ENCODE measurements at regions of chr6 and their contacts with region 1.

Region 1: GRCh38 chr6:116969211-116969863 is 92.3 kb downstream of the RFX6 start:
- DNase-seq: peak; percentile 74
- H3K4me3 Mint-ChIP-seq: no peak overlapping the region
- H3K27ac Mint-ChIP-seq: no peak overlapping the region
- H3K4me1 Mint-ChIP-seq: no peaks in the 10 kb centered on the region
- H3K27me3 Mint-ChIP-seq: peaks cover 63% of the 10 kb centered on the region
- CTCF ChIP-seq: peak; percentile 59

Region 2: GRCh38 chr6:116881236-116881635 is 88.1 kb before region 1 on chr6:
- CTCF ChIA-PET with region 1: interaction called, 5 read pairs
- POLR2A ChIA-PET with region 1: no interaction called
- intact Hi-C with region 1: loop called (anchors 1 kb)
- DNase-seq: peak; percentile 28
- H3K4me3 Mint-ChIP-seq: no peak overlapping the region
- H3K27ac Mint-ChIP-seq: no peak overlapping the region
- H3K4me1 Mint-ChIP-seq: no peaks in the 10 kb centered on the region
- H3K27me3 Mint-ChIP-seq: peaks cover 55% of the 10 kb centered on the region
- CTCF ChIP-seq: no peak

Region 3: GRCh38 chr6:117078624-117079023 is 109.3 kb after region 1 on chr6:
- CTCF ChIA-PET with region 1: no interaction called
- POLR2A ChIA-PET with region 1: no interaction called
- intact Hi-C with region 1: no loop called
- DNase-seq: no peak
- H3K4me3 Mint-ChIP-seq: no peak overlapping the region
- H3K27ac Mint-ChIP-seq: no peak overlapping the region
- H3K4me1 Mint-ChIP-seq: no peaks in the 10 kb centered on the region
- H3K27me3 Mint-ChIP-seq: peaks cover 61% of the 10 kb centered on the region
- CTCF ChIP-seq: no peak

Region 4: GRCh38 chr6:117167520-117168271 is 198.4 kb after region 1 on chr6:
- CTCF ChIA-PET with region 1: interaction called, 10 read pairs
- POLR2A ChIA-PET with region 1: no interaction called
- intact Hi-C with region 1: no loop called
- DNase-seq: peak; percentile 90
- H3K4me3 Mint-ChIP-seq: peak overlapping the region; percentile 61
- H3K27ac Mint-ChIP-seq: peak overlapping the region; percentile 65
- H3K4me1 Mint-ChIP-seq: peaks cover 27% of the 10 kb centered on the region
- H3K27me3 Mint-ChIP-seq: no peaks in the 10 kb centered on the region
- CTCF ChIP-seq: no peak

Region 5: GRCh38 chr6:117270055-117270842 is 300.9 kb after region 1 on chr6:
- CTCF ChIA-PET with region 1: no interaction called
- POLR2A ChIA-PET with region 1: no interaction called
- intact Hi-C with region 1: loop called (anchors 10 kb)
- DNase-seq: no peak
- H3K4me3 Mint-ChIP-seq: no peak overlapping the region
- H3K27ac Mint-ChIP-seq: no peak overlapping the region
- H3K4me1 Mint-ChIP-seq: peaks cover 6% of the 10 kb centered on the region
- H3K27me3 Mint-ChIP-seq: peaks cover 97% of the 10 kb centered on the region
- CTCF ChIP-seq: no peak

Region 6: GRCh38 chr6:117829594-117830319 is 860.4 kb after region 1 on chr6:
- CTCF ChIA-PET with region 1: no interaction called
- POLR2A ChIA-PET with region 1: no interaction called
- intact Hi-C with region 1: loop called (anchors 2 kb)
- DNase-seq: peak; percentile 59
- H3K4me3 Mint-ChIP-seq: peak overlapping the region; percentile 37
- H3K27ac Mint-ChIP-seq: no peak overlapping the region
- H3K4me1 Mint-ChIP-seq: peaks cover 4% of the 10 kb centered on the region
- H3K27me3 Mint-ChIP-seq: peaks cover 90% of the 10 kb centered on the region
- CTCF ChIP-seq: peak; percentile 52